ENCODE measurements at regions of chr2 and their contacts with region 1.

Region 1: DNA sequence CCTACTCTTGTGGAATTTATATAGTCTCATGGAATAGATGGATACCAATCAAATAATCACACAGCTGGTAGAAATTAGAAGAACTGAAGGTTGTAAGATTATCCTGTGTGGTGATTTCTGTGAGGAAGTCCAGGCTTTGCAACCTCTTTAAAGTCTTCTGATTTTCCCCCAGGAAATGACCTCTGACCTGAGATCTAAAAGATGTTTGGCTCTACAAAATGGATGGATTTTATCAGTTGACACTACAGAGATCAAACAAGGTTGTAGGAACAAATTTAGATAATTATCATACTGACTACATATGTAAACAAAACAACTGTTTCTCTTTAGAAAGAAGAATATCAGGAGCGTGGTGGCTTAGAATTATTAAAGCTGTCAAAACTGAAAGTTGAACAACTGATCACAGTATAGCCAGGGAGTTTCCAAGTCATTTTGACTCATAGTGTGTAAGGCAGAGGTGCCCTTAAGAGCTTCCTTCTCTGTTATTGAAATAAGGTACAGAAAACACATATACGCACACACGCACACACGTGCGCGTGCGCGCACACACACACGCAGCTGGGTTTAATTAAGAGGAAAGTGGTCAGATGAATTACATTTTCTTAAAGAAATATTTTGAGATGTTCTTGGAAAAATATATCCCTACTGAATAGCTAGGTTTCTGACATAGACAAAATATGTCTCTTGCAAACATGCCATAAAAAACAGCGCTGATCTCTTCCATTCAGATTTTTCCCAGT is 35.5 kb upstream of the PELI1 start:
- DNase-seq: peak; percentile 70
- ATAC-seq: peak; percentile 98
- H3K4me3 ChIP-seq: no peak overlapping the region
- H3K27ac ChIP-seq: peak overlapping the region; percentile 57
- H3K4me1 ChIP-seq: peaks cover 12% of the 10 kb centered on the region; the same call in 1 of the 2 replicates
- H3K27me3 ChIP-seq: no peaks in the 10 kb centered on the region
- CTCF ChIP-seq: no peak
- EP300 ChIP-seq: peak; percentile 64 to 69; a peak in 2 of 4 replicates
- POLR2A ChIP-seq: no peak
- RAD21 ChIP-seq: no peak

Region 2: DNA sequence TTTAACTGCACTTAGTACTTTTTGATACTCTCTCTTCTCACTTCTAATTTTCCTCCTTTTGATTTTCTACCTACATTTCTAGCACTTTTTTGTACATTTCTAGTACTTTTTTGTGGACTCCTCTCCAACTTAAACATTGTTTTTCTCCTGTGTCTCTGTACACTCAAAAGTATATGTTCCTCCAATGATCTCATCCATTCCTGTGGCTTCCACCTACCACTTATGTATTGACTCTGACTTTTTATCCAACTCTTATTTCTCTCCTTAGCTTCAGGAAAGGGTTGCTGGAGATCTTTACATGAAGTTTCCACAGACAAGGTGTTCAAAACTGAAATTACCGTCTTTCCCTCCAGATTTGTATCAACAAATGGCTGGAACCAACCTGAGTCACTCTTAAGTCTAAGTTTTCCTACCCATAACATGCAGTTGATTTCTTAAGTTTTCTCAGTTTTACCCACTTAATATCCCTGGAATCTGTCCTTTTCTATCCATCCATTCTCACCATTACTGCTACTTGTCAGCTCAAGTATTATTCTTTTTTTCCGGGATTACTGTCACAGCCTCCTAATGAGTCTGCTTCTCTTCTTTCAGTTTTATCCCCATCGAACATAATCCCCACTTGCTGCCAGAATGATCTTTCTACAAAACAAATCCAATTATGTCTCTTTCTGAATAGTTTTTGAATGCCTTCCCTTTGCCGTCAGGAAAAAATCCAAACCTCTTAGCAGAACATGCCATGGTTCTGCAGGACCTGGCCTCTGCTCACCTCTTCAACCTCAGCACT is 12.9 kb before region 1 on chr2:
- CTCF ChIA-PET with region 1: interaction called, 16 read pairs
- POLR2A ChIA-PET with region 1: interaction called, 14 read pairs
- RAD21 ChIA-PET with region 1: interaction called, 12 read pairs
- SMC1A ChIA-PET with region 1: interaction called, 9 read pairs
- in situ Hi-C with region 1: no loop called
- intact Hi-C with region 1: no loop called
- DNase-seq: no peak
- ATAC-seq: no peak
- H3K4me3 ChIP-seq: no peak overlapping the region
- H3K27ac ChIP-seq: no peak overlapping the region
- H3K4me1 ChIP-seq: no peaks in the 10 kb centered on the region
- H3K27me3 ChIP-seq: no peaks in the 10 kb centered on the region
- CTCF ChIP-seq: no peak
- EP300 ChIP-seq: no peak
- POLR2A ChIP-seq: no peak
- RAD21 ChIP-seq: no peak

Region 3: DNA sequence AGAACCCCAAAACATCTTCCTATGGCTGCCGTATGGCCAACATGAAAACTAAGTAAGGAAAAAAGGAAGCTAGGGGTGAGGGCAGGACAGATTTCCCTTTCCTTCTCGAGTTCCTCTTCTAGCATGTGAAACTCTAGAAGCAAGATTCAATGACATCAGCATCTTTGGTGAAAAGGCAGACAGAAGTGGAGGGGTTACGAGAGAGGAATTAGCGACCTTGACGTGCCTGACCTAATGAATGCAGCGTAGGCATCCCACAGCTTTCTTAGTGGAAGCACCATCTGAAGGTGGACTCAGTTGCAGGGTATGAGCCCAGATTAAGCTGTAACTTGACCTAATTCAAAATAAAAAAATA is 12.3 kb after region 1 on chr2:
- CTCF ChIA-PET with region 1: no interaction called
- POLR2A ChIA-PET with region 1: interaction called, 7 read pairs
- RAD21 ChIA-PET with region 1: interaction called, 5 read pairs
- SMC1A ChIA-PET with region 1: interaction called, 11 read pairs
- in situ Hi-C with region 1: no loop called
- intact Hi-C with region 1: no loop called
- DNase-seq: no peak
- ATAC-seq: peak; percentile 68
- H3K4me3 ChIP-seq: no peak overlapping the region
- H3K27ac ChIP-seq: no peak overlapping the region
- H3K4me1 ChIP-seq: peaks cover 26% of the 10 kb centered on the region
- H3K27me3 ChIP-seq: no peaks in the 10 kb centered on the region
- CTCF ChIP-seq: no peak
- EP300 ChIP-seq: no peak
- POLR2A ChIP-seq: no peak
- RAD21 ChIP-seq: no peak

Measured in GM12878 (cell line).